PC-3 (cell line): ENCODE measurements at regions of chr2 and their contacts with region 1.

Region 1: GRCh38 chr2:174603280-174603679 is 5.7 kb upstream of the WIPF1 start:
- DNase-seq: peak; percentile 46
- ATAC-seq: peak; percentile 52
- H3K4me3 ChIP-seq: no peak overlapping the region
- H3K27ac ChIP-seq: no peak overlapping the region
- H3K4me1 ChIP-seq: peaks cover 15% of the 10 kb centered on the region
- H3K27me3 ChIP-seq: no peaks in the 10 kb centered on the region
- CTCF ChIP-seq: peak; percentile 75

Region 2: DNA sequence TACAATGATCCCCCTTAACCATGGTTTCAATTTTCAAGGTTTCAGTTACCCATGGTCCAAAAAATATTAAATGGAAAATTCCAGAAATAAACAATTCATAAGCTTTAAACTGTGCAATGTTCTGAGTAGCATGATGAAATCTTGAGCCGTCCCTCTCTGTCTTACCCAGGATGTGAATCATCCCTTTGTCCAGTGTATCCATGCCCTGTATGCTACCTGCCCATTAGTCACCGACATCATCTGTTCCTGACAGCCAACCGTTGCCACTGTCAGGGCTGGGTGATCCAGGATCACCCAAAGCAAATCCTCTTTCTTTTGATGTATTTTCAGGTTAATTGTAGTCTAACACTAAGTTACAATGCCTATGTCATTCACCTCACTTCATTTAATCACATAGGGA is 339.3 kb before region 1 on chr2:
- CTCF ChIA-PET with region 1: no interaction called
- POLR2A ChIA-PET with region 1: no interaction called
- intact Hi-C with region 1: no loop called
- DNase-seq: peak; percentile 91
- ATAC-seq: peak; percentile 100
- H3K4me3 ChIP-seq: no peak overlapping the region
- H3K27ac ChIP-seq: peak overlapping the region; percentile 69
- H3K4me1 ChIP-seq: peaks cover 12% of the 10 kb centered on the region
- H3K27me3 ChIP-seq: no peaks in the 10 kb centered on the region
- CTCF ChIP-seq: no peak

Region 3: GRCh38 chr2:174688079-174688478 is 84.8 kb after region 1 on chr2:
- CTCF ChIA-PET with region 1: no interaction called
- POLR2A ChIA-PET with region 1: no interaction called
- intact Hi-C with region 1: loop called (anchors 1 kb)
- DNase-seq: peak; percentile 60
- ATAC-seq: peak; percentile 74
- H3K4me3 ChIP-seq: no peak overlapping the region
- H3K27ac ChIP-seq: no peak overlapping the region
- H3K4me1 ChIP-seq: no peaks in the 10 kb centered on the region
- H3K27me3 ChIP-seq: peaks cover 30% of the 10 kb centered on the region
- CTCF ChIP-seq: peak; percentile 69